Mammary epithelial cell (primary cell): ENCODE measurements at regions of chr15 and their contacts with region 1.

Region 1: GRCh38 chr15:95536638-95537037 is 793.9 kb upstream of the NR2F2 start:
- DNase-seq: no peak
- H3K4me3 ChIP-seq: no peak overlapping the region
- H3K27ac ChIP-seq: no peak overlapping the region
- H3K4me1 ChIP-seq: no peaks in the 10 kb centered on the region
- H3K27me3 ChIP-seq: peaks cover 1% of the 10 kb centered on the region
- CTCF ChIP-seq: no peak

Region 2: DNA sequence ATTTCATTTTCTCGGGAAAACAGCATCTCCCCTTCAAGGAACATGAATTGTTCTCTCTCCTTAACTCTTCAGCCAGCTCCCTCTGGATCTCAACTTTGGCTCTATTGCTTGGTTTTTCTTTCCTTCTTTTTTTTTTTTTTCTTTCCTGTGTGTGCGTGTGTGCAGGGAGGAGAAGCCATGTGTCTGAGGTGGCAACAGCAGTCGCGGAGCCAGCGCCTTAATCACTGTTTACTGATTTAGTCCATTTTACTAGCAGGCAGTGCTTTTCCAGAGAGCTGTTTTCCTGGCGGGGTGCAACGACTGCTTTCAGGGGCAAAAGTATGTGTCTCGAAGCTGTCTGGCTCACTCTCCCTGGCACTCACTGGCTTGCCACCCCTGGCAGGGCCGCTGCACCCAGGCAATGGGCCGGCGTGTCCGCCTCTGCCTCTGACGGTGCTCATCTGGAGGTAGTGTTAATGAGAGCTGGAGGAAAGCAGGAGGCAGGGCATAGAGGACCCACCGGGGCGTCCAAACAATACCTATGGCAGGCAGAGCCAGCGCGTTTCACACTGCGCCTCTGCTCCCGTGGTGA is 41.6 kb before region 1 on chr15:
- CTCF ChIA-PET with region 1: no interaction called
- dilution Hi-C with region 1: loop called (anchors 5 kb)
- in situ Hi-C with region 1: no loop called
- intact Hi-C with region 1: no loop called
- DNase-seq: no peak
- H3K4me3 ChIP-seq: no peak overlapping the region
- H3K27ac ChIP-seq: no peak overlapping the region
- H3K4me1 ChIP-seq: no peaks in the 10 kb centered on the region
- H3K27me3 ChIP-seq: peaks cover 2% of the 10 kb centered on the region
- CTCF ChIP-seq: no peak